Head of caudate nucleus (tissue), 42 donors: ENCODE measurements at regions of chr5 and their contacts with region 1.

Region 1: DNA sequence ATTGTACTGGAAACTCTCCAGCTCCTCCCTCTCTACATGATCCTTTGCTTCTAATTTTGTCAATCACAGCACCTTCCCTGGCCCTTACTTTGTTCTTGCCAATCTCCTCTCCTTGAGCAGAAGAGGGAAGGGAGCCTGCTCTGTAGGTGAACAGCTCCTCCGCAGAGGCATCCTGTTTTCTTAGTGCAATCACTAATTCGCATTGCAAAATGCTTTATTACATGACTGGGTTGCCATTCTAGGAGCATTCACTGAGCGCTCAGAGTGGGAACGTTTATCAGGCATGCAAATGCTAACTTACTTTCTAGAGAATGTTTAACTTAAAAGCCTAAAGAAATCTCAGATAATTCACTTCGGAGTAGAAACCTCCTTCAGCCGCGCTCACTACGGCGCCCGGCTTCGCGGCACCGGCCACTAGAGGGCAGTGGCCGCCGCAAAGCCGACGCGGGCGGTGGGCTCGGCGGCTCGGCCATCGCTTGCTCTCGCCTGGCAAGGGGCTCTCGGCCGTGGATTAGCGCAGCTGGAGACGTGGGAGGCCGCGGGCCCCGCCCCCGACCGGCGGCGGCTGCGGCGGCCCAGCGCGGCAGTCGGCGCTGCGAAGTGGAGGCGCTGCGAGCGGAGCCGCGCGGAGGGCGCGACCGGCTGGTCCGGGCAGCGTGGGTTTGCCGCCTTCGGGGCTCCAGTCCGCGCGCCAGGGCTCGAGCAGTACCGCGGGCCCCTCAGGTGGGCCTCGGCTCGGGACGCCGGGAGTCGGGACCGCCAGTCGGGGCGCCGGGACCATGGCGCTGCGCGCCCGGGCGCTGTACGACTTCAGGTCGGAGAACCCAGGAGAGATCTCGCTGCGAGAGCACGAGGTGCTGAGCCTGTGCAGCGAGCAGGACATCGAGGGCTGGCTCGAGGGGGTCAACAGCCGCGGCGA is at the start of gene SNX18:
- DNase-seq: peak; percentile 75 to 97 (median 93)

Region 2: DNA sequence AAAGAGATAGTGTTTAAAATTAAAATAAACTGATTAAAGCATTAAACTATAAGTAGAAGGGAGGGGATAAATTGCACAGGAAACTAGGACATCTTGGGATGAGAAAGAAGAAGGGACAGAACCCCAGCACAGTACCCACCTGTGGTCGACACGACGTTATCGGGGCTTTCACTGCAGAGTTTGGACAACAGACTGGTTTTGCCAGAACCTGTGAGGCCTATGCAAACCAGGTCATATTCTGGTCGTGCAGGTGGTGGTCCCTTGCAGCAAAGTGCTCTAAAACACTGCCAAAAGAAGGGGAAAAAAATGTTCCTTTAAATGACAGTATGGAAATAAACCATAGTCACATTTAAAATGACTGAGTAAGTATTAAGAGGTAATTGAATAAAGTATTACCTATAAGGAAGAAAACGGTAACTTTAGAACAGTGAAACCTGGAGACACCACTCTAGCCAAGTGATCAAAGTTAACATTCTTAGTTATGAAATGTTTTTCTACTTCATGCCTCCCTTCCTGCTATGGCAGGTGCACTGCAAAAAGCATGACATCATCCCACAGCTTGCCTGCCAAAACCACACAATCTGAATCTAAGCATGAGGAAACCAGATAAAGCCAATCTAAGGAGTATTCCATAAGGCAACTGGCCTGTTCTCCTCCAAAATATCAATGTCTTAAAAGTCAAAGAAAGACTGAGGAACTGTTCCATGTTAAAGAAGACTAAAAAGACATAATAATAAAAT is 345.6 kb before region 1 on chr5:
- intact Hi-C with region 1: no loop called
- DNase-seq: no peak

Region 3: DNA sequence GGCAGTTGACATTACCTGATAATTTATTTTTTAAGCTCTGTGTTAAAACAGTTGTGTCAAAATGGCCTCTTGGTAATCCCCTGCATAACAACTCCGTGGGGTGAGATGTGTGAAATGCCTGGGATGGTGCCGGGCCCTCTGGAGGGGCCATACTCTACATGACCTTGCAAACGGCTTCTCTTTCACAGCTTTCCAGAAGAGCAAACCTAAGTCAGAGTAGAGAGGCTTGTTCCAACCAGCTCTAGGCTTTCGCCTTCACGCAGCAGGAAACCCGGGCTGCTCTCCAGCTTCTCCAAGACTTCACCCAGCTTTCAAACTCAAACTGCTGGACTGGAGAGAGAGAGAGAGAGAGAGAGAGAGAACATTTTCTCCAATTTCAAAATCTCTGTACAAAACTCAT is 120.2 kb after region 1 on chr5:
- intact Hi-C with region 1: loop called (anchors 10 kb)
- DNase-seq: peak in 5 of 42 donors; percentile 22 to 51 (median 34)

Region 4: GRCh38 chr5:54844905-54845566 is 327.6 kb after region 1 on chr5:
- intact Hi-C with region 1: loop called (anchors 2 kb)
- DNase-seq: peak in 1 of 42 donors; percentile 22

Region 5: DNA sequence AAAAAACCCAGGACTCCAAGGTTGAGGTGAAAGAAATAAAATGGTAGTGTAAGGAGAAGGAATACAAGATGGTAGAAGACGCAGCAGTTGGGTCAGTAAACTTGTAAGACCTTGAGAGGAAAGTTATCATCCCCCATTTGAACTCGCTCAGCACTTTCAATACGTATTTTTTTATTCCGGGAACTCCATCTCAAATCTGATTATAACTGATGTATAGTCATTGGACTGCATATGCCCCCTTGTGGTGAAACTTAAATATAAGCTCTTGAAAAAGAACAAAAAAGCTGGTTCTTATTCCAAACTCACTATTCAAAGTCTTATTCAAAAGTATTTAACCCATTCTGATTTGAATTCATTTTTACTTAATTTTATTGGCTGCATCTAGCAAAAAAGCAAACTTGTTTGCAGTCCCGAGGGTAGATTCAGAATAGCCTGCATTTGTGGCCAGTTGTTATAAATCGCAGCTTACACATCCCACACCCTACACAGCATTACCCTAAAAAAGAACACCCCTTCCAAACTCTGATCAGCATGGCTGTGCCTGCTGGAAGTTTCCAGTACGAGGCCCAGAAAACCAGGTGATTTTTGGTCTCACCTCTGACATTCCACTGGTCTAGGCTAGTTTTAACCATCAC is 350.0 kb after region 1 on chr5:
- intact Hi-C with region 1: loop called (anchors 2 kb)
- DNase-seq: peak in 2 of 42 donors; percentile 12 to 21